Aorta (tissue), 5 donors: ENCODE measurements at regions of chr13 and their contacts with region 1.

Region 1: DNA sequence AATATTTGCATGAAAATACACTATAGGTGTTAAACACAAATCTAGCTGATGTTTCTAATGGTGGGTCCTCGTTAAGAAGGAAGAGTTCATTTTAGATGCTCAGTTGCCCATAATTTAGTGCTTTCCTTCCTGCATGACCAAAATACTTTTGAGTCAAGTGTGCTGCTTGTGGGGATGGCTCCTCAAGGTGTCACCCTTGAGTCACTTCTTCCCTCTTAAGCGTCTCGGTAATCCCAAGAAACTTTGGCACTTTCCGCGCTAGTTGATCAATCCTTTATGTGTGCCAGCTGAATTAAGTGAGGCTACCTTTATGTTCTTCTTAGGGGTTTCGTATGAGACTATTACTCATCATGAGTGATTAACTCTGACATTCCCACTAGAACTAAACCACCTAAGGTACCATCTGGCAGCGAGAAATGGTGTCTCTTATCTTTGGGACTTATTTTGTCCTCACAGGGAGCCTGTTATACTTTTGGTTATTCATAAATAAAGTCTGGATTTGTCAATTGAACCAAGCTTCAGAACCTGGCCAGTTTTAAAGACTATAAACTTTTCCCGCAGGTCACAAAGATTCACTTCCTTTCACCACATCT is 106.8 kb downstream of the NHLRC3 start:
- DNase-seq: peak; percentile 51 to 75
- ATAC-seq: peak; percentile 88
- H3K4me3 ChIP-seq: peak overlapping the region in 1 of 2 donors; percentile 31
- H3K27ac ChIP-seq: no peak overlapping the region
- H3K4me1 ChIP-seq: no peaks in the 10 kb centered on the region
- H3K27me3 ChIP-seq: no peaks in the 10 kb centered on the region

Region 2: DNA sequence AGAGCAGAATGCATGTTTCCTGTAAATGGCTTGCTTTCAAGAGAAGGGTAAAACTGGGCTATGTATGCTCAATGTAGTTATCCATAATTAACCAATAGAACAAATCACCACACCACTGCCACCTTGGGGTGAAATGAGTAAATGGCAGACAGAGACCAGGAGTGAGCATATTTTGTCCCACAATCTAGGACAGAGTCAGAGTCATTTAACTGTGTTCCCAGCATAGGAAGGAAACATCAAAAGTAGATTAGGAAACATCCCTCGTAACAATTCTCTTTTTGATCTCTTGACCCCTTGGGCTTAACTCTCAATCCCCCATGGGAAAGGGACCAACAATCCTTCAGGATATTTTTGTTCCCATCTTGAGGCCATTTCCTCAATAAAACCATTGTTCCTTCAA is 118.0 kb after region 1 on chr13:
- intact Hi-C with region 1: loop called (anchors 2 to 5 kb)
- DNase-seq: no peak
- ATAC-seq: peak; percentile 75
- H3K4me3 ChIP-seq: no peak overlapping the region
- H3K27ac ChIP-seq: no peak overlapping the region
- H3K4me1 ChIP-seq: no peaks in the 10 kb centered on the region
- H3K27me3 ChIP-seq: no peaks in the 10 kb centered on the region